Spleen (tissue), 13 donors: ENCODE measurements at regions of chr19 and their contacts with region 1.

Region 1: GRCh38 chr19:18846862-18847548 is 15.2 kb downstream of the UPF1 start:
- DNase-seq: peak; percentile 94
- H3K4me3 ChIP-seq: no peak overlapping the region
- H3K27ac ChIP-seq: peak overlapping the region in 5 of 8 donors; percentile 84 to 91 (median 86)
- H3K4me1 ChIP-seq: peaks cover 57 to 96% (median 87%) of the 10 kb centered on the region in 6 donors
- H3K27me3 ChIP-seq: no peaks in the 10 kb centered on the region
- CTCF ChIP-seq: peak; percentile 23 to 87 (median 82)
- POLR2A ChIP-seq: no peak

Region 2: DNA sequence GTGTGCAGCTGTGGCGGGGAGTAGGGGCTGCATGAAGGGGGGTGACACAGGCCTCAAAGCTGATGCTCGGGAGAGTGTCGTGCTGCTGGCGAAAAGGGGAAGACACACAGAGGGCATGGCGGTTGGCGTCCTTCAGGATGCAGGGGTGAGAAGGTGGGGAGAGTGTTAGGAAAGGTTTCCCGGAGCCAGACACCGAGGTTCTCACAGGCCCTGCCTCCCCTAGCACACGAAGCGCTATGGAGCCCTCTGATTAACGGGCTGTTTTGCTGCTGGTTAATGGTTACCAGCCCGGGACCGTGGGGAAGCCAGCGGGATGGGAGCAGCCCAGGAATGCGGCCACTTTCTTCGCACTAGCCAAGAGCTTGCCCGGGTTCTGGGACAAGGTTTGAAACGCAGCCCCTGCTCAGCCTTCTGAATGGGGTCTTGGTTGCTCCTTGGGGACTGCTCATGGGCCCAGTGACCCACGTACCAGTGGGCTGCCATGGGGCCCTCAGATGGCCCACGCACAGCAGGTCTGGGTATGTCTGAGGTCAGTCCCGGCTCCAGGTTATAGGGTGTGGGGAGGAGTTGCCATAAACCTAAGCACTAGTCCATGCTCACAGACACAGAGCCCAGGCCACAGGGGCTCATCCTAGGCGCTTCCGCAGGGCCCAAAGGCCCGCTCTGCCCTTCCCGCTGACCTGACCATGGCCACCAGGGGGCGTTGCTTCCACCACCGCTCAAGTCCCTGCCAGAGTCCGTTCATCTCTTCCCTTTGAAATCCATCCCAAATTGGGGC is 377.7 kb before region 1 on chr19:
- intact Hi-C with region 1: loop called (anchors 10 kb)
- DNase-seq: peak; percentile 89
- H3K4me3 ChIP-seq: no peak overlapping the region
- H3K27ac ChIP-seq: peak overlapping the region in 4 of 8 donors; percentile 14 to 63 (median 22)
- H3K4me1 ChIP-seq: peaks cover 4 to 94% (median 41%) of the 10 kb centered on the region in 6 donors
- H3K27me3 ChIP-seq: no peaks in the 10 kb centered on the region
- CTCF ChIP-seq: peak; percentile 61 to 90 (median 79)
- POLR2A ChIP-seq: no peak

Region 3: GRCh38 chr19:18589380-18590272 is 257.4 kb before region 1 on chr19:
- intact Hi-C with region 1: loop called (anchors 5 kb)
- DNase-seq: peak; percentile 93
- H3K4me3 ChIP-seq: peak overlapping the region; percentile 77 to 98 (median 94)
- H3K27ac ChIP-seq: peak overlapping the region; percentile 89 to 96 (median 92)
- H3K4me1 ChIP-seq: peaks cover 19 to 67% (median 46%) of the 10 kb centered on the region in 6 donors
- H3K27me3 ChIP-seq: peaks cover 0 to 7% (median 0%) of the 10 kb centered on the region in 7 donors
- CTCF ChIP-seq: peak in 5 of 11 experiments; percentile 16 to 51 (median 23)
- POLR2A ChIP-seq: no peak